Vagina (tissue), 2 donors: ENCODE measurements at regions of chr2 and their contacts with region 1.

Region 1: DNA sequence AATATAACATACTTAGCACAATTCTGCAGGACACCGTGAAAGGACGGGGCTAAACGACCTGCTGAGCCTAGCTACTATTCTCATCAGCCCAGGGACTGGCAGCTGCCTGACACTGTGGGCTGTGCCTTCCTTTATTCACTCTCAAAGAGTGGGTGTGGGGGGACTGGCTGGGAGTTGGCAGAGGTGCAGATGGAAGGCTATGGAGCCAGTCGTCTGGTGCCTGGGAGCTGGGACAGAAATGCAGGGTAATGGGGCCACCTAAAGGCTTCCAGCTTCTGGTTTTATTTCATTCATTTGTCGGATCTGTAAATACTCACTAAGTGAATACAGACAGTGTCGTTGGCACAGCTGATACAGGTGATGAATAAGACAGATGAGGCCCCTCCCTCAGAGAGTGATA is 56.0 kb upstream of the NFU1 start:
- DNase-seq: no peak
- H3K4me3 ChIP-seq: no peak overlapping the region
- H3K27ac ChIP-seq: no peak overlapping the region
- H3K4me1 ChIP-seq: no peaks in the 10 kb centered on the region
- H3K27me3 ChIP-seq: no peaks in the 10 kb centered on the region
- CTCF ChIP-seq: no peak
- POLR2A ChIP-seq: no peak

Region 2: DNA sequence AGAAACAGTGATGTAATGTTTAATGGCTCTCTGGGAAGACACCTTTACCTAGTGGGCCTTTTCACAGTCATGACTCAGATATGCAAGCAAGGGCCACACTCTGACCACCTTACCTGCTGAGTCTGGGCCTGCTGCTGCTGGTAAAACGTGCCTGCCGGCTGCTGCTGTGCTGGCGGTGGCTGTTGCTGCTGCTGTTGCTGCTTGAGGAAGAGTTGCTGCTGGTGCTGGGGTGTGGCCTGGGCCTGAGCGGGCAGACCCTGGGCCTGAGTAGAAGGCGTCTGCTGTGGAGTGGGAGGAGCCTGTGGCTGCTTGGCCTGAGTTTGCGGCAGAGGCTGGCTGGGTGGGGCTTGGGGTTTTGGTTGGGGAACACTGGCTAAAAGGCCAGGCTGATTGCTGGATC is 25.6 kb after region 1 on chr2:
- intact Hi-C with region 1: loop called (anchors 1 kb)
- DNase-seq: no peak
- H3K4me3 ChIP-seq: no peak overlapping the region
- H3K27ac ChIP-seq: no peak overlapping the region
- H3K4me1 ChIP-seq: no peaks in the 10 kb centered on the region
- H3K27me3 ChIP-seq: no peaks in the 10 kb centered on the region
- CTCF ChIP-seq: no peak
- POLR2A ChIP-seq: no peak

Region 3: GRCh38 chr2:70009762-70010575 is 516.7 kb after region 1 on chr2:
- intact Hi-C with region 1: no loop called
- DNase-seq: no peak
- H3K4me3 ChIP-seq: no peak overlapping the region
- H3K27ac ChIP-seq: no peak overlapping the region
- H3K4me1 ChIP-seq: no peaks in the 10 kb centered on the region
- H3K27me3 ChIP-seq: no peaks in the 10 kb centered on the region
- CTCF ChIP-seq: no peak
- POLR2A ChIP-seq: no peak